HEK293 (cell line): ENCODE measurements at regions of chr2 and their contacts with region 1.

Region 1: DNA sequence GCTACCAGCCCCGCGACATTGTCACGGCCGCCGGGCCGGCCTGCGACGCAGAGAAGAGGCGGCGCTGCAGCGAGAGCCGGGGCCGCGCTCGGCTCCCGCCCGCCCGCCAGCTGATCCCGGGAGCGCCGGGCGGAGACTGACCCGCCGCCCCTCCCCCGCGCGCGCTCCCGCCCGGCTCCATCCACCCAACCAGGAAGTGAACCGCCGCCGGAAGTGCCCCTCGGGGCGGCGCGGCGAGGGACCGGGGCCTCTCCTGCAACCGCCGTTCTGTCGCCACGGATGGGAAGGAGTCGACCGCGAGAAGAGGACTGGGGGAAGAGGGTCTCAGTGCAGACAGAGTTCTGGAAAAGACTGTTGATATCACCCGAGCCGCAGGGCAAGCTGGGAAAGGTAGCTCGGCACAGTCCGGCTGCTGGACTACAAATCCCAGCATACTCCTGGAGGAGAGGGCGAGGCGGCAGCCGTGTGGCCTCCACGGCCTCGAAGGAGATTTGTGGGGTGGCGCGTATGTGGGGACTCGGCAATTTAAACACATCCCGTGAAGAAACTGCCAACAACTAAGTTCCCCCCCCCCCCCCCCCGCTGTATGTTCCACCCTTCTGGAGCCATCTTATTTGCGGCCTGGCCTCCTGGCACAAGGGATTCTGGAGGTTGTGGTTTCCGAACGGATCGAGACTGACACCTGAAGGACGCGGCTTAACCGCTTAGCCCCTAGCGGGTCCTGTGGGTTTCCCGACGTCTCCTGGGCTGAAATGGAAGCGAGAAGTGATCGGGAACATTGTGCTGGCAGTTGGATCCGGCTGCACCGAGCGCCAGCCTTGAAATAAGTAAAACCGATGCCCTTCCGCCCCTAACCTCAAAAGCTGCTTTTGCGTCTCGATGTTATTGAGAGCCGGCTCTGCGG is at the start of gene AAK1:
- H3K4me3 ChIP-seq: peak within 1 kb of the TSS; percentile 86
- H3K27ac ChIP-seq: peak within 1 kb of the TSS; percentile 94
- H3K4me1 ChIP-seq: peaks cover 8% of the 10 kb centered on the region; the same call in 1 of the 2 replicates
- CTCF ChIP-seq: no peak

Region 2: DNA sequence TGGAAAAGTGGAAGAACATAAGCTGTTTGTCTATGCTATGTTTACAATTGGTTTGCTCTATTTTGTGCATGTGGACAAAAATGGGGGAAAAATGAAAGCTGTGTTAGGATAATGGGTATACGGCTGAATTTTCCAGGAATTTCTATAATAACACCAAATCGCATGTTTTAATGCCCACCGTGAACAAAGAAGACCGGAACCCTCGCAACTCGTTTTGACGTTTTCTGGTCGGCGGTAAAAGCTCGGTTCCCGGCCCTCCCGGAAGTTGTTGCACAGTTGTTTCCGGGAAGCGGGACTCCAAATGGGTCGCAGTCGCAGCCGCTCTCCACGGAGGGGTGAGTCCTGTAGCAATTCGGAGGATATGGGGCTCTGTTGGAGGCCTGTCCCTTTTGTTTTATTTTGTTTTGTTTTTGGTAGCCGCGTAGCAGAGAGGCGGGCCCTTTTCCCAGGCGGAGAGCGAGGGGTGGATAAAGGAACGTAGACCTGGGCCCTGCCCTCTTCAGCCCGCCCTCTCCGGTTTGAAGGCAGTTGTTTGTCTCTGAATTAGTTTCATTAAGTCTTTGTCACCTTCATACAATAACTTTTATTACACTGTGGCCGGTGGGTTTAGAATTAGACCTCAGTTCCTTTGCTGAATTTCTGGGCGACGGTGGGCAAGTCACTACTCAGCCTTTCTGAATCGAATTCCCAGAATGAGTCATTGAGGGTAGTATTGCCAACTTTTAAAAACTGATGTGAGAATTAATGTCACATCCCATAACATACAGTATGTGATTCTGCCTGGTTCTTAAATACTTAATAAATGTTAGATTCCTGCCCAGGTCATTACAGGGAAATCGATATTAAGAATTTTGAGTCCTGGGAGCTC is 250.1 kb after region 1 on chr2 and contains the start of gene SNRNP27:
- CTCF ChIA-PET with region 1: no interaction called
- POLR2A ChIA-PET with region 1: interaction called, 11 read pairs
- H3K4me3 ChIP-seq: peak within 1 kb of the TSS; percentile 84
- H3K27ac ChIP-seq: peak within 1 kb of the TSS; percentile 42
- H3K4me1 ChIP-seq: peaks cover 3% of the 10 kb centered on the region; the same call in 1 of the 2 replicates
- CTCF ChIP-seq: no peak